ENCODE measurements at regions of chr15 and their contacts with region 1.

Region 1: GRCh38 chr15:35519541-35520149 is 26.3 kb downstream of the DPH6 start:
- DNase-seq: peak in 2 of 9 experiments; percentile 55 to 63
- ATAC-seq: no peak
- H3K4me3 ChIP-seq: no peak overlapping the region
- H3K4me3 Mint-ChIP-seq: no peak overlapping the region
- H3K27ac ChIP-seq: no peak overlapping the region
- H3K27ac Mint-ChIP-seq: no peak overlapping the region
- H3K4me1 ChIP-seq: no peaks in the 10 kb centered on the region
- H3K4me1 Mint-ChIP-seq: peaks cover 6% of the 10 kb centered on the region
- H3K27me3 ChIP-seq: no peaks in the 10 kb centered on the region
- H3K27me3 Mint-ChIP-seq: no peaks in the 10 kb centered on the region
- CTCF ChIP-seq: peak; percentile 79

Region 2: DNA sequence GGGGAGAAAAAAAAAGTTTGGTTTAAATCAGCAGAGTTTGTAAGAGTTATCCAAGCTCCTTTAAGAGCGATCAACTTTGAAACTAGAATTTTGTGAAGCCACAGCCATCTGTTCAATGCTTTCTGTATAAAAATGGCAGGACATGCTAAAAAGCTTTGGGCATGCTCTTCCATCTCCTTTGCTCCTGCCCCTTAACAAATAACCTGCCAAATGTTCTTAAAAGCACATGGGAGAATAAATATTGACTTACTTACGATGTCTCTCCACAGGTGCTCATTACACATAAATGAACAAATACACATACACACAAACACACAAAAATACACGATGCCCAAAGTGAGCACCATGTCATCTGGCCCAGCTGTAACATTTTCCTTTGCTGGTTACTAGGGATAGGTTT is 238.1 kb after region 1 on chr15:
- CTCF ChIA-PET with region 1: no interaction called
- POLR2A ChIA-PET with region 1: no interaction called
- intact Hi-C with region 1: loop called in 1 of 2 experiments (anchors 5 kb)
- DNase-seq: no peak
- ATAC-seq: no peak
- H3K4me3 ChIP-seq: no peak overlapping the region
- H3K4me3 Mint-ChIP-seq: no peak overlapping the region
- H3K27ac ChIP-seq: no peak overlapping the region
- H3K27ac Mint-ChIP-seq: no peak overlapping the region
- H3K4me1 ChIP-seq: no peaks in the 10 kb centered on the region
- H3K4me1 Mint-ChIP-seq: no peaks in the 10 kb centered on the region
- H3K27me3 ChIP-seq: no peaks in the 10 kb centered on the region
- H3K27me3 Mint-ChIP-seq: peaks cover 2% of the 10 kb centered on the region
- CTCF ChIP-seq: no peak

Region 3: DNA sequence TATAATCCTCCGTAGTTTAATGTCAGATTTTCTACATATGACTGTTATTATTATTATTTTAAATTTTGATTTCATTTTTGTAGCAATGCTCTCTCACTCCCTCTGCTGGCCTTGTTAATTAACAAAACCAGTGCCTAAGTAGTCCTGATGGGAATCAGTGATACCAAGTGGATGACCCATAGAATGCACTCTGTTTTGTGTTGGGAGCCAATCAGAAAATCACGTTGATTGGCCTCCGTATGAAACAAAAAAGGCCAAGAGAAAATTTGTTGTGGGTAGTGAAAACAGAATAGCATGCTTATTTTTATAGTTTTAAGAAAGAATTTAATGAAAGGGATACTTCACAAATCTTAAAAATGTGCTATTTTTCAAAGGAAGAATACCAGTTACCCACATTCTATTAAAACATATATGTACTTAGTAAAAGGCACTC is 1615.1 kb after region 1 on chr15:
- CTCF ChIA-PET with region 1: no interaction called
- POLR2A ChIA-PET with region 1: no interaction called
- intact Hi-C with region 1: loop called (anchors 1 to 2 kb)
- DNase-seq: peak in 2 of 9 experiments; percentile 11 to 15
- ATAC-seq: no peak
- H3K4me3 ChIP-seq: no peak overlapping the region
- H3K4me3 Mint-ChIP-seq: no peak overlapping the region
- H3K27ac ChIP-seq: no peak overlapping the region
- H3K27ac Mint-ChIP-seq: no peak overlapping the region
- H3K4me1 ChIP-seq: no peaks in the 10 kb centered on the region
- H3K4me1 Mint-ChIP-seq: no peaks in the 10 kb centered on the region
- H3K27me3 ChIP-seq: no peaks in the 10 kb centered on the region
- H3K27me3 Mint-ChIP-seq: peaks cover 8% of the 10 kb centered on the region
- CTCF ChIP-seq: no peak